Psoas muscle (tissue), 8 donors: ENCODE measurements at regions of chr4 and their contacts with region 1.

Region 1: GRCh38 chr4:37132351-37132974 is 112.1 kb upstream of the NWD2 start:
- DNase-seq: no peak
- ATAC-seq: no peak
- H3K4me3 ChIP-seq: no peak overlapping the region
- H3K27ac ChIP-seq: no peak overlapping the region
- H3K4me1 ChIP-seq: no peaks in the 10 kb centered on the region
- H3K27me3 ChIP-seq: no peaks in the 10 kb centered on the region
- CTCF ChIP-seq: no peak

Region 2: DNA sequence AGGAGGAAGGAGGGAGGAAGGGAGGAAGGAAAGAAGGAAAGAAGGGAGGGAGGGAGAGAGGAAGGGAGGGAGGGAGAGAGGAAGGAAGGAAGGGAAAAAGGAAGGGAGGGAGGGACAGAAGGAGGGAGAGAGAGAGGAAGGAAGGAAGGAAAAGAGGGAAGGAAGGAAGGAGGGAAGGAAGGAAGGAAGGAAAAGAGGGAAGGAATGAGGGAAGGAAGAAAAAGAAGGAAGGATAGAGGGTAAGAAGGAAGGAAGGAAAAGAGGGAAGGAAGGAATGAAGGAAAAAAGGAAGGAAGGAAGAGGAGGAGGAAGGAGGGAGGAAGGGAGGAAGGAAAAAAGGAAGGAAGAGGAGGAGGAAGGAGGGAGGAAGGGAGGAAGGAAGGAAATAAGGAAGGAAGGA is 1685.0 kb before region 1 on chr4:
- intact Hi-C with region 1: no loop called
- DNase-seq: no peak
- ATAC-seq: no peak
- H3K4me3 ChIP-seq: no peak overlapping the region
- H3K27ac ChIP-seq: no peak overlapping the region
- H3K4me1 ChIP-seq: no peaks in the 10 kb centered on the region
- H3K27me3 ChIP-seq: no peaks in the 10 kb centered on the region
- CTCF ChIP-seq: no peak

Region 3: DNA sequence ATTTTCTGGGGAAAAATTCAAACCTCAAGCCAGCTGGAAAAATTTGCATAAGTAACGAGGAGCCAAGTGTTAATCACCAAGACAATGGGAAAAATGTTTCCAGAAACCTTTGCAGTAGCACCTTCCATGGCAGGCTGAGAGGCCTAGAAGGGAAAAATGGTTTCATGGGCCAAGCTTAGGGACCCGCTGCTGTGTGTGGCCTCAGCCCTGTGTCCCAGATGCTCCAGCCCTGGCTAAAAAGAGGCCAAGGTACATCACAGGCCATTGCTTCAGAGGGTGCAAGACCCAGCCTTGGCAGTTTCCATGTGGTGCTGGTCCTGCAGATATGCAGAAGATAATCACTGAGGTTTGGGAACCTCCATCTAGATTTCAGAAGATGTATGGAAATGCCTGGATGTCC is 13.8 kb after region 1 on chr4:
- intact Hi-C with region 1: loop called in 1 of 2 experiments (anchors 1 kb)
- DNase-seq: no peak
- ATAC-seq: no peak
- H3K4me3 ChIP-seq: no peak overlapping the region
- H3K27ac ChIP-seq: no peak overlapping the region
- H3K4me1 ChIP-seq: no peaks in the 10 kb centered on the region
- H3K27me3 ChIP-seq: no peaks in the 10 kb centered on the region
- CTCF ChIP-seq: no peak